Aorta (tissue), 5 donors: ENCODE measurements at regions of chr16 and their contacts with region 1.

Region 1: GRCh38 chr16:2874912-2875362 is 8.1 kb upstream of the FLYWCH2 start:
- DNase-seq: peak; percentile 89 to 93
- ATAC-seq: peak; percentile 98
- H3K4me3 ChIP-seq: no peak overlapping the region
- H3K27ac ChIP-seq: no peak overlapping the region
- H3K4me1 ChIP-seq: no peaks in the 10 kb centered on the region
- H3K27me3 ChIP-seq: no peaks in the 10 kb centered on the region

Region 2: GRCh38 chr16:2919511-2920255 is 44.7 kb after region 1 on chr16:
- intact Hi-C with region 1: loop called (anchors 2 kb)
- DNase-seq: peak in 1 of 2 donors; percentile 70
- ATAC-seq: peak; percentile 91
- H3K4me3 ChIP-seq: no peak overlapping the region
- H3K27ac ChIP-seq: peak overlapping the region in 1 of 2 donors; percentile 74
- H3K4me1 ChIP-seq: peaks cover 0 to 2% of the 10 kb centered on the region in 2 donors
- H3K27me3 ChIP-seq: no peaks in the 10 kb centered on the region